GM13976 (cell line): ENCODE measurements at regions of chr10 and their contacts with region 1.

Region 1: GRCh38 chr10:128263891-128264688 is 137.9 kb upstream of the MKI67 start:
- DNase-seq: peak; percentile 51
- CTCF ChIP-seq: peak; percentile 51

Region 2: GRCh38 chr10:128530301-128530700 is 266.2 kb after region 1 on chr10:
- in situ Hi-C with region 1: loop called (anchors 25 kb)
- DNase-seq: peak; percentile 40
- CTCF ChIP-seq: peak; percentile 26